ENCODE measurements at regions of chr21 and their contacts with region 1.

Region 1: DNA sequence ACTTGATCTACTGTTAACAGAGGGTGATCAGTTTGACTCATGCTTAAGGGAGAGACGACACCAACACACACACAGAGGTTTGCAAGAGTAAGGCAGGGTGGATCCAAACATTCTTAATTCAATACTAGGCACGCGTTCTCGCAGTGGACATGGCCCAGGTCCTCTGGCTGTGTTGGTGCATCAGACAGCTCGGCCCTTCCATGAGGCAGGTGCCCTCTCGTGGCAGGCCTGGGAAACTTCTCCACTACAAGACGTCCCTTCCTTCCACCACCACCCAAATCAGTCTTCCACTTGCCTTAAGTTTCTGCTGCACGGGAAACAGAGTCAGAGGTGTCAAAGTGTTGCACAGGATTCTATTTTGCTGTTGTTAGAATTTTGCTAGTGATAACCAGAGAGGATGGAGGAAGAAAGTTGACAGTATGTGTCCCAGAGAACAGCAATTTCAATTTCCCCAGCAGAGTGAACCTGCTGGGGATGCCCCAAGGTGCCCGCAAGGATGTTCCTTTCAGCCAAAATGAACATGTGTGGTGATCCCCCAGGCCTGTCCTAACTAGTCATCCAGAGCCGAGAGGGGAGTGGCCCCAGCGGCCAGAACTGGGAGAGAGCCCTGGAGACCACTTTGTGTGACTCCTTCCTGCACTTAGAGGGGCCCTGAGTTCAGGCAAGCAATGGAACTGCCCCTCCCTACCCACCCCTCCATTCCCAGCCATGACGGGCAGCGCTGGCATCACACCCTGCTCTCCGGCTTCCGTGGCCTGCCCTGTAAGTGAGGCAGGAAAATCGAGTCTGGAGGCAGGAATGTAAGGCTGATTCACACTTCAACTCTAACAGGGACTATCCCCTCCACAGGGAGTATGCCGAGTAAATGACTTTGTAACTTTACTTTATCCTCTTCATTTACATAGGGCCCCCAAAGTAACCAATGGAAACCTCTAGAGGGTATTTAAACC is 34.8 kb downstream of the MX1 start:
- DNase-seq: peak; percentile 77
- ATAC-seq: peak; percentile 90 to 92

Region 2: GRCh38 chr21:41121785-41122421 is 338.9 kb before region 1 on chr21:
- intact Hi-C with region 1: loop called (anchors 2 to 5 kb)
- DNase-seq: peak; percentile 84
- ATAC-seq: peak; percentile 84

Region 3: GRCh38 chr21:41283211-41283818 is 177.5 kb before region 1 on chr21:
- intact Hi-C with region 1: loop called (anchors 1 to 5 kb)
- DNase-seq: no peak
- ATAC-seq: peak; percentile 88 to 95

Region 4: DNA sequence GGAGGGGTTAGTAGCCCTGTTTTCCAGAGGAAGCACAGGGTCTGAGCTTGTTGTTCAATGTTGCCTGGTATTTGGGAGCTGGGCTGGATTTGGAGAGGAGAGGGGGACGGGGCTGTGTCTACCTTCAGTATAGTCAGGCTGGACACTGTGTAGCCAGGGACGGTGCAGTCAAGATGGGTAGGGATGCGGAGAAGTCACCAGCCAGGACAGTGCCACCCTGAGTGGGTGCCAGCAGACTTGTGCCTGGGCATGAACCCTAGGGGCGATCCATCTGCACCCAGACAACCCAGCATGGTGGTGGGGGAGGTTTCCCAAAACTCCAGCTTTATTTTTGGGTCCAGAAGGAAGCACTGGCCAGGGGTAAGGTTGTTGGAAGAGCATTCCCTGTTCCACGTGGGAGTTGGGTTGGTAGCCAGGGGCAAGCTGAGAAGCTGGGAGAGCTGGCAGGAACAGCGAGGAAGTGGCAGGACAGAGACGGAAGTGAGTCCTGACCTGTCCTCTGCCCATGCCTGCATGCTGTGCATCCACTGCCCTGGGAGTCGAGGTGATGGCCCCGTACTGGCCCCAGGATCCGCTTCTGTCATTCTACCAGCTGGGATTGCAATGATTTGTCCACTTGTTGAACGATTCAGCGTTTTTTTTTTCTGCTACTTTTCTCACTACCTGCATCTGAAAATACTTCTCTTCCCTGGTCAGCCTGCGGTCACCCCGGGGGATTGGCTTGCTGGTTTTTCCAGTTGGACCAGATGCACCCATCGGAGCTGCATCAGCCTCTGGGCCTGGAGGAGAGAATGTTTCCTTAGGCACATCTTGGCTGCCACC is 75.2 kb after region 1 on chr21:
- intact Hi-C with region 1: no loop called
- DNase-seq: no peak
- ATAC-seq: no peak

Region 5: DNA sequence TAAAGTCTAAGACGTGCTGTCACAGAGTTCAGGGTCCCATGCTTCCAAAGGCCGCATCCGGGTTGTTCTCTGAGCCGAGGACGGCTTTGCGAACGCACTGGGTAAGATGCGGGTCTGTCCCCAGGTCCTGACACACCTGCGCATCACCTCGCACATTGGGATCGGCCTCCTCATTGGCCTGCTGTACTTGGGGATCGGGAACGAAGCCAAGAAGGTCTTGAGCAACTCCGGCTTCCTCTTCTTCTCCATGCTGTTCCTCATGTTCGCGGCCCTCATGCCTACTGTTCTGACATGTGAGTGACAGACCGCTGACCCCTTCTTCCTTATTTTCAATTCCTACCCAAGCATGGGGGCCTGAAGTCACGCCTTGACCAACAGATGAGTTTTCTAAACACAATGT is 829.1 kb after region 1 on chr21:
- intact Hi-C with region 1: no loop called
- DNase-seq: peak; percentile 43
- ATAC-seq: peak; percentile 28 to 49